PC-3 (cell line): ENCODE measurements at regions of chr20 and their contacts with region 1.

Region 1: DNA sequence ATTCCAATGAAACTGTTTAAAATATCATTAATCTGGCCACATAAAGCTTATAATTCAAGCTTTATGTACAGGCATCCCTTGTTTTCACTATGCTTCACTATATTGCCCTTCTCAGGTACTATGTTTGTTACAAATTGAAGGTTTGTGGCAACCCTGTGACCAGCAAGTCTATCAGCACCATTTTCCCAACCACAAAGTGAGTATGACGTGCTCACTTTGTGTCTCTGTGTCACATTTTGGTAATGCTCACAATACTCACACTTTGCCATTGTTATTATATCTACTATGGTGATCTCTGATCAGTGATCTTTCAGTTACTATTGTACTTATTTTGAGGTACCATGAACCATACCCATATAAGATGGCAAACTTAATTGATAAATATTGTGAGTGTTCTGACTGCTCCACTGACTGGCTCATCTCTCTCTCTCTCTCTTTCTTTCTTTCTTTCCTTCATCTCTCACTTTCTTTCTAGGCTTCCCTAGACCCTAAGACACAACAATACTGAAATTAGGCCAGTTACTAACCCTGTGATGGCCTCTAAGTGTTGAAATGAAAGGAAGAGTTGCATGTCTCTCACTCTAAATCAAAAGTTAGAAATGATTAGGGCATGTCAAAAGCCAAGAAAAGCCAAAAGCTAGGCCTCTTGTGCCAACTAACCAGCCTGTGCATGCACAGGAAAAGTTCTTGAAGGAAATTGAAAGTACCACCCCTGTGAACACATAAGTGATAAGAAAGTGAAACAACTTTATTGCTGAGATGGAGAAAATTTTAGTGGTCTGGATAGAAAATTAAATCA is 227.9 kb downstream of the BCAS1 start:
- DNase-seq: no peak
- ATAC-seq: no peak
- H3K4me3 ChIP-seq: no peak overlapping the region
- H3K27ac ChIP-seq: no peak overlapping the region
- H3K4me1 ChIP-seq: peaks cover 38% of the 10 kb centered on the region
- H3K27me3 ChIP-seq: no peaks in the 10 kb centered on the region
- CTCF ChIP-seq: no peak

Region 2: GRCh38 chr20:53875433-53875832 is 32.9 kb after region 1 on chr20:
- CTCF ChIA-PET with region 1: no interaction called
- POLR2A ChIA-PET with region 1: no interaction called
- intact Hi-C with region 1: no loop called
- DNase-seq: no peak
- ATAC-seq: no peak
- H3K4me3 ChIP-seq: no peak overlapping the region
- H3K27ac ChIP-seq: no peak overlapping the region
- H3K4me1 ChIP-seq: peaks cover 28% of the 10 kb centered on the region
- H3K27me3 ChIP-seq: no peaks in the 10 kb centered on the region
- CTCF ChIP-seq: no peak

Region 3: DNA sequence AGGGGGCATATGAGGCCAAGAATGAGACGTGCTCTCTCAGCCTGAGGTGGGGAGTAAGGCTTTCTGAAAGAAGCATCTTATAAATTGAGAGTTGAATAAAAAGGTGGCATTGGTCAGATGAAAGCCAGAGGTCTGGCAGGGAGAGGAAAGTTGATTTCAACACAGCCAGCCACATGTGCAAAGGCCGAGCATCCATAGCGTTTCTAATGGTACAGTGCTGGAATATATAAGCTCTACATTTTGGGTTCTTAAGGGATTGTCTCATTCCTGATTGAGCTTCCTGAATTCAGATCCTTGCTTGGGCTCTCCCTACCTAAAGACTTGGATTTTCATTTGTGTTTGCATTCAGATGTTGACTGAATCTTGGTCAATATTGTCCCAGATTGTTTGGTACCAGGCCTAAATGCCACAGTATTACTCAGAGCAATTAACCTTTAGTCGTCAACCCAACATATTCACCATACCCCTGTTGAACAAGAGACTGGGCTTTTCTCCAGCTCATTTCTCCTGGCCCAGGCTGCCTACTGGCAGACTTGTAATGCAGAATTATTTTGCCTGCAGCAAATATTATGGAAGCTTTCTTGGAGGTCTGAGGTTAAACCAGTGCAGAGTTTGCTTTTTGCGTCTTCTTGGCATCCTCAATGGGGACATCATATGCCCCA is 242.4 kb after region 1 on chr20:
- CTCF ChIA-PET with region 1: no interaction called
- POLR2A ChIA-PET with region 1: interaction called, 13 read pairs
- intact Hi-C with region 1: no loop called
- DNase-seq: peak; percentile 92
- ATAC-seq: peak; percentile 93
- H3K4me3 ChIP-seq: no peak overlapping the region
- H3K27ac ChIP-seq: no peak overlapping the region
- H3K4me1 ChIP-seq: peaks cover 18% of the 10 kb centered on the region
- H3K27me3 ChIP-seq: no peaks in the 10 kb centered on the region
- CTCF ChIP-seq: no peak